Mucosa of descending colon (tissue), 3 donors: ENCODE measurements at regions of chr3 and their contacts with region 1.

Region 1: GRCh38 chr3:196609343-196609775 is 30.1 kb upstream of the NRROS start:
- DNase-seq: peak; percentile 94 to 96 (median 95)
- ATAC-seq: peak; percentile 100
- H3K4me3 ChIP-seq: no peak overlapping the region
- H3K4me1 ChIP-seq: peaks cover 8% of the 10 kb centered on the region
- CTCF ChIP-seq: peak; percentile 60

Region 2: GRCh38 chr3:196202516-196202970 is 406.8 kb before region 1 on chr3:
- intact Hi-C with region 1: no loop called
- DNase-seq: peak in 2 of 3 donors; percentile 33 to 70
- ATAC-seq: peak; percentile 64
- H3K4me3 ChIP-seq: no peak overlapping the region
- H3K4me1 ChIP-seq: no peaks in the 10 kb centered on the region
- CTCF ChIP-seq: no peak

Region 3: GRCh38 chr3:196684548-196685407 is 75.4 kb after region 1 on chr3:
- intact Hi-C with region 1: loop called (anchors 5 kb)
- DNase-seq: peak in 2 of 3 donors; percentile 52 to 86
- ATAC-seq: peak; percentile 93
- H3K4me3 ChIP-seq: no peak overlapping the region
- H3K4me1 ChIP-seq: peaks cover 4% of the 10 kb centered on the region
- CTCF ChIP-seq: peak; percentile 56

Region 4: GRCh38 chr3:196694941-196695848 is 85.8 kb after region 1 on chr3:
- intact Hi-C with region 1: no loop called
- DNase-seq: no peak
- ATAC-seq: no peak
- H3K4me3 ChIP-seq: no peak overlapping the region
- H3K4me1 ChIP-seq: no peaks in the 10 kb centered on the region
- CTCF ChIP-seq: no peak